ENCODE measurements at regions of chr11 and their contacts with region 1.

Region 1: DNA sequence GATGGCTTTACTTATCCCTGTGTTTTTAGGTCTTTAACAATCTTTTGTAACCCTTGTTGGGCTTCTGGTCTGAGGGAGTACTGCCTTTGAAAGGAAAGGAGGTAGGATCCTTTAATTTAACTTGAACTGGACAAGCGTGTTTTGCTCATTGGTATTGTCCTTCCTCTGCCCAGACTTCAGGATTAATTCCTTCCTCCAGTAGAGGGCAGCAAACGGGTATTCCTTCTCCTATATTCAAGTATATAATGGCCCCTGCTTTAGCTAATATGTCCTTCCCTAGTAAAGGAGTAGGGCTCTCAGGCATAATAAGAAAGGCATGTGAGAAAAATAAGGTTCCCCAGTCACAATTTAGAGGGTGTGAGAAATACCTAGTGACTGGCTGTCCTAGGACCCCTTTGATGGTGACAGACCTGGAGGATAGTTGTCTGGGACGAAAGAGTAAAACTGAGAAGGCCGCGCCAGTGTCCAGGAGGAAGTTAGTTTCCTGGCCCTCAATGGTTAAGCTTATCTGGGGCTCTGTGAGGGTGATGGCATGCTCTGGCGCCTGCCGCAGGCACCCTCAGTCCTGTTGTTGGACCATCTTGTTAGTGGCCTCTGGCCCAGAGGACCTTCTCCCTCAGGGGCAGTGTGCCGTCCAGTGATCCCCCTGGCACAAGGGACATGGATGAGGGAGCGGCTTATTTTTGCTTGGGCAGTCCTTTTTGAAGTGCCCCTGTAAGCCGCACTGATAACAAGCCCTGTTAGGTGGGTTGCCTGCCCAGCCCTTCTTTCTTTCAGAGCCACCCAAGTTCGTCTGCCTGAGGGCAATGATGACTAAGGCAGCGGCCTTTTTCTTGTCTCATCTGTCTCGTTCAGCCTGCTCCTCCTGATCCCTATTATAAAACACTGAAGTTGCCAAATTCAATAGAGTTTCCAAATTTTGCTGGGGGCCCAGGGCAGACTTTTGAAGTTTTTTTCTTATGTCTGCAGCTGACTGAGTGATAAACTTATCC is 51.8 kb downstream of the C11orf71 start:
- DNase-seq: peak; percentile 92
- ATAC-seq: peak; percentile 89
- H3K4me3 ChIP-seq: no peak overlapping the region
- H3K27ac ChIP-seq: no peak overlapping the region
- H3K4me1 ChIP-seq: peaks cover 27% of the 10 kb centered on the region
- H3K27me3 ChIP-seq: no peaks in the 10 kb centered on the region
- CTCF ChIP-seq: peak; percentile 74

Region 2: GRCh38 chr11:114197799-114198500 is 150.5 kb before region 1 on chr11:
- CTCF ChIA-PET with region 1: no interaction called
- POLR2A ChIA-PET with region 1: no interaction called
- intact Hi-C with region 1: no loop called
- DNase-seq: peak; percentile 60
- ATAC-seq: peak; percentile 15
- H3K4me3 ChIP-seq: no peak overlapping the region
- H3K27ac ChIP-seq: no peak overlapping the region
- H3K4me1 ChIP-seq: peaks cover 13% of the 10 kb centered on the region; the same call in 1 of the 2 replicates
- H3K27me3 ChIP-seq: peaks cover 49% of the 10 kb centered on the region
- CTCF ChIP-seq: no peak

Region 3: DNA sequence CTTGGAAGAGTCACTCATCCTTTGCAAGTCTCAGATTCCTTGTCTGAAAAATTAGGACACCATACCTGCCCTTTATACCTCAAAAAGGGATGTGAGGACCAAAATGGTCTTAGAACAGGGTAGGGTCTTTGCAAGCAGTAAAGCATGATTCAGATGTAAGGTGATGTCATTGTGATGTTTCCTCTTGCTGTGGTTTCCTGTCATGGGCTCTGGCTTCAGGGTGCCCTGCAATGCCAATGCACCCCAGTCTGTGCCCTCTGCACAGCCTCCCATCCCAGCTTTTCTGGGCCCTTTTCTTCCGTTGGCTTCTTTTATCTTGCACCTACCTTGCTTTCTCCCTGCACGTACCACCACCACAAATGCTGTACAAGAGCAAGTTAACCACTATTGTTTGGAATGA is 140.1 kb before region 1 on chr11:
- CTCF ChIA-PET with region 1: no interaction called
- POLR2A ChIA-PET with region 1: no interaction called
- intact Hi-C with region 1: no loop called
- DNase-seq: no peak
- ATAC-seq: no peak
- H3K4me3 ChIP-seq: no peak overlapping the region
- H3K27ac ChIP-seq: no peak overlapping the region
- H3K4me1 ChIP-seq: no peaks in the 10 kb centered on the region
- H3K27me3 ChIP-seq: peaks cover 88% of the 10 kb centered on the region
- CTCF ChIP-seq: no peak

Region 4: DNA sequence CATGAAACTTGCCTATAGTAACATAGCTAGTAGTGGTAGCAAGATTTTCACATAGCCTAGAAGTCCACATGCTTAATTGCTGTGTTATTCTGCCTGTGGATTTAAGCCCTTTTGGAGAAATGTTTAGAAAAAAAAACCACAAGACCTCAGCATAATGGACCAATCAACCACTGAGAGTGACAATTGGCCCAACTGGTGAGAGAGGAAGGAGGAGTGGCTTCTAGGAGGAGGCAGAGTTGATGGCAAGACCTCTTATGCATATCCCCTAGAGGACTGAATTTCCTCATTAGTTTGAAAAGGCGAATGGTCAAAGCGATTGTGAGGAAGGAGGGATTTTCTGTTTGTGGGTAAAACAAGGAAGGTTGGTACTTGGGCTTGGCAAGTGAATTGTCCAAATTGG is 21.7 kb before region 1 on chr11:
- CTCF ChIA-PET with region 1: no interaction called
- POLR2A ChIA-PET with region 1: no interaction called
- intact Hi-C with region 1: no loop called
- DNase-seq: no peak
- ATAC-seq: no peak
- H3K4me3 ChIP-seq: no peak overlapping the region
- H3K27ac ChIP-seq: no peak overlapping the region
- H3K4me1 ChIP-seq: peaks cover 9% of the 10 kb centered on the region
- H3K27me3 ChIP-seq: no peaks in the 10 kb centered on the region
- CTCF ChIP-seq: no peak

Region 5: GRCh38 chr11:114439229-114440120 is 91.0 kb after region 1 on chr11 and contains the start of gene REXO2:
- CTCF ChIA-PET with region 1: no interaction called
- POLR2A ChIA-PET with region 1: no interaction called
- intact Hi-C with region 1: loop called (anchors 2 kb)
- DNase-seq: peak; percentile 99
- ATAC-seq: peak; percentile 94
- H3K4me3 ChIP-seq: peak within 1 kb of the TSS; percentile 97
- H3K27ac ChIP-seq: peak within 1 kb of the TSS; percentile 33
- H3K4me1 ChIP-seq: peaks cover 31% of the 10 kb centered on the region
- H3K27me3 ChIP-seq: no peaks in the 10 kb centered on the region
- CTCF ChIP-seq: peak; percentile 32; the same call in 1 of the 2 replicates
- total RNA-seq, gene REXO2: 145 and 181 TPM in 2 replicates

Region 6: DNA sequence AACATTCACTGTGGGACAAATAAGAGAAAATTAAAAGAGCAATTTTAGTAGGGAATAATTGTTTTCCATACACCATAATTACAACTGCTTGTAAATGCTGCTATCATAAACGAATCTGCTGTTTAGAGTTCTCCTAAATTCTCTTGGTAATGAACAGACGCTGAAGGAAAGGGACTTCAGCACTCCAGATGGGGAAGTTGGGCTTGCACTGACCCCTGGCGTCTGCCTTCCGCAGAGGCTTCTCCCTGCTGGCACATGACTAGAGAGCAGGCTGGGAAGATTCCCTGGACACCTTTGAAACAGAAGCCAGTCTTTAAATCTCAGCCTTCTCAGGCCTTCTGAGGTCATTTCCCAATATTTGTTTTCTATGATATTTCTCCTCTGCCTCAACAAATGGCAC is 413.9 kb after region 1 on chr11:
- CTCF ChIA-PET with region 1: no interaction called
- POLR2A ChIA-PET with region 1: no interaction called
- intact Hi-C with region 1: loop called (anchors 2 kb)
- DNase-seq: peak; percentile 75
- ATAC-seq: peak; percentile 81
- H3K4me3 ChIP-seq: no peak overlapping the region
- H3K27ac ChIP-seq: no peak overlapping the region
- H3K4me1 ChIP-seq: no peaks in the 10 kb centered on the region
- H3K27me3 ChIP-seq: no peaks in the 10 kb centered on the region
- CTCF ChIP-seq: peak; percentile 83

Measured in PC-3 (cell line).